Left colon (tissue), 2 donors: ENCODE measurements at regions of chrX and their contacts with region 1.

Region 1: DNA sequence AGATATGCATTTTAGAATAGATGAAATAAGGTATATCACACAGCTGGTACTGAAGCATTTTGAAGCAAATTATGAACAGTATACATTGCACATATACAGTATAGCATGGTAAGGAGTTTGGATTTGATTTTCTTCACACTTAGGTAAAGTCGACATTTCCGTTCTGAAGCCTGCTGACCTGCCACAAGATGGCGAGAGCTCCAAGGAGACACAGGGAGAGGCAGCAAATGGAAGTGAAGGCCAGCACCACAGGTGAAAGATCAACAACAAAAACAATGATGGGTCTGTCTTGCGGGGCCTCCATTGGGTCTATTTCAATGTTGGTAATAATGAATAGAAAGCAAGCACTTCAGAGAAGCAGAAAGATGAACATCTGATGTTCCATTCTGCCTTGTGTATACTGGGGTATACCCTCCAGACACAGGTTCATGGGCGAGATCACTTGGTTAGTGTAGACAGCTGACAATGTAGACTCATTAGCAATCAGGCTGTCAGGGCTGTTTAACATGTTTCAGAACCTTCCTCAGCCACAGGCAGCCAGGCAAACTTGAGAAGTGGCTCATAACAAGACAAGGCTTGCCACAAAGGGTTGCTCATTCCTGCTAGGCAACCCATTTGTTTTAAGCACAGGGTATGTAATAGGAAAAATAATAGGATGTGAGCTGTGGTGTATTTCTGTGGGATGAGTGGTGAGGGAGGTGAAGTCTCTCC is 21.4 kb upstream of the NOX1 start:
- DNase-seq: peak in 1 of 2 donors; percentile 25
- ATAC-seq: peak; percentile 79

Region 2: GRCh38 chrX:100265179-100265578 is 630.3 kb before region 1 on chrX:
- intact Hi-C with region 1: no loop called
- DNase-seq: no peak
- ATAC-seq: no peak

Region 3: DNA sequence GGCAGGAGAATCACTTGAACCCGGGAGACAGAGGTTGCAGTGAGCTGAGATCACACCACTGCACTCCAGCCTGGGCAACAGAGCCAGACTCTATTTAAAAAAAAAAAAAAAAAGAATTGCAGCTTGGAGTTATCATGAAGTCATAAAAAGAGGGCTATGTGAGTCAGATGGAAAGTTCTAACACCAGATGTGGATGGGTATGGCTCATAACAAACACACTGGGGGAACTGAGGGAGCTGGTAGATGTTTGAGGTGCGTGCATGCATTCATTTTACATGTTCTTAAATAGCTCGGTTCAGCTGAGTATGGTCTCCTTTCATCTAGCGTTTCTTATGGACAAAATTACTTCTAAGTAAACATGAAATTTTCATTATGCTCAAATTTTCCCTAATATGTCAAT is 144.7 kb after region 1 on chrX:
- intact Hi-C with region 1: no loop called
- DNase-seq: no peak
- ATAC-seq: no peak

Region 4: DNA sequence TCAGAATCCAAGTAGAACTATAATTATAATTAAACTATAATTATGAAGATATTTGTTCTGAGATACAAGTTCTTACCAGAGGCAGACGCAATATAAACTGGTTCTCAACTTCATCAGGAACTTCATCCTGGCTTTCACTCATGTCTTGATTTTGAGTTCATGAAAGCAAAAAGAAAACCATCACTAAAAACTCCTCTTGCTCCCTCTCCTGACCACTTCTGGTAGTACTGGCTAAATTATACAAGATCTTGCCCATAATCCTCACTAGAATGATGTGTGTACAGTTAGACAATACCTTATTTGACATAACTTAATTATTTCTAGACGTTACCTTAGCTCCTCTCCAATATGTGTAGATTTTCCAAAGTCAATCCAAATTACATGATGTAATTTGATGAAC is 391.9 kb after region 1 on chrX:
- intact Hi-C with region 1: loop called in 1 of 2 experiments (anchors 10 kb)
- DNase-seq: no peak
- ATAC-seq: peak; percentile 62